Activated CD4-positive, alpha-beta T cell treated with anti-CD3 and anti-CD28 coated beads for 36 hours (primary cell): ENCODE measurements at regions of chr5 and their contacts with region 1.

Region 1: DNA sequence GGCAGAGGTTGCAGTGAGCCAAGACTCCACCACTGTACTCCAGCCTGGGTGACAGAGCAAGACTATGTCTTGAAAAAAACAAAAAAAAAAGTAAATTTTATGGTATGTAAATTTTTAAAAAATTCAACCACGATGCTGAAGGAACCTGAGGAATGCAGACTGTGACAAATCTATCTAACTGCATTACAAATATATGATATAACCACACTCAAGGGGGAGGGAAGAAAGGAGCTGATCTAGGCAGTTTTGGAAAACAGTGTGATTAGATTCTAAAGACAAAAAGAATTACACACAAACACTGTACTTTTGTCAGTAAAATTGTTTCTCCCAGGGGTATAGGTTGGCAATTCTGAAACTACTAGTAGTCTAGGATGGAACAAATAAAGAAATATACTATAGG is 17.0 kb downstream of the LARS1 start:
- DNase-seq: no peak
- ATAC-seq: no peak
- H3K4me3 Mint-ChIP-seq: no peak overlapping the region
- H3K27ac Mint-ChIP-seq: no peak overlapping the region
- H3K4me1 Mint-ChIP-seq: peaks cover 4% of the 10 kb centered on the region
- H3K27me3 Mint-ChIP-seq: no peaks in the 10 kb centered on the region

Region 2: GRCh38 chr5:145975361-145976066 is 189.9 kb before region 1 on chr5:
- CTCF ChIA-PET with region 1: no interaction called
- POLR2A ChIA-PET with region 1: no interaction called
- intact Hi-C with region 1: no loop called
- DNase-seq: peak; percentile 8
- ATAC-seq: no peak
- H3K4me3 Mint-ChIP-seq: no peak overlapping the region
- H3K27ac Mint-ChIP-seq: no peak overlapping the region
- H3K4me1 Mint-ChIP-seq: peaks cover 4% of the 10 kb centered on the region
- H3K27me3 Mint-ChIP-seq: peaks cover 8% of the 10 kb centered on the region

Region 3: GRCh38 chr5:146151970-146152369 is 13.5 kb before region 1 on chr5:
- CTCF ChIA-PET with region 1: interaction called, 3 read pairs
- POLR2A ChIA-PET with region 1: no interaction called
- intact Hi-C with region 1: loop called in 1 of 2 experiments (anchors 1 kb)
- DNase-seq: no peak
- ATAC-seq: no peak
- H3K4me3 Mint-ChIP-seq: no peak overlapping the region
- H3K27ac Mint-ChIP-seq: no peak overlapping the region
- H3K4me1 Mint-ChIP-seq: no peaks in the 10 kb centered on the region
- H3K27me3 Mint-ChIP-seq: no peaks in the 10 kb centered on the region

Region 4: GRCh38 chr5:146188358-146188757 is 22.9 kb after region 1 on chr5:
- CTCF ChIA-PET with region 1: no interaction called
- POLR2A ChIA-PET with region 1: no interaction called
- intact Hi-C with region 1: no loop called
- DNase-seq: no peak
- ATAC-seq: no peak
- H3K4me3 Mint-ChIP-seq: no peak overlapping the region
- H3K27ac Mint-ChIP-seq: no peak overlapping the region
- H3K4me1 Mint-ChIP-seq: peaks cover 9% of the 10 kb centered on the region
- H3K27me3 Mint-ChIP-seq: peaks cover 5% of the 10 kb centered on the region

Region 5: DNA sequence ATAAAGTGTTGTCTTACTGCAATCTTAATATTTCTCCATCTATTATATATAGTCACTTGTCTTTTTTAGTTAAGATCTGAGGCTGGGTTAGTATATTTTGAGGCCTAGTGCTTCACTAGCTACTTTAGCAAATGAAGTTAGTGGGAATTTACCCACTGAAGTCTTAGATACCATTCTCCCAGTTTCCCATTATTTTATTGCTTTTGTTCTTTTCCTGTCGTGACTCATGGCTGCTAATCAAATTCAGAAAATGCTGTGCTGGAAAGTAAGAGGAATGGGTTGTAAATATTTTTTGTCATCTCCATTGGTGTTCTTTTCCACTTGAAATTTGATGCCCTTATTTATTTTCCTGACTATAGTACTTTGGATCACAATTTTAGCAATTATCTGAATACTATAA is 295.9 kb after region 1 on chr5:
- CTCF ChIA-PET with region 1: no interaction called
- POLR2A ChIA-PET with region 1: no interaction called
- intact Hi-C with region 1: loop called in 1 of 2 experiments (anchors 5 kb)
- DNase-seq: no peak
- ATAC-seq: no peak
- H3K4me3 Mint-ChIP-seq: no peak overlapping the region
- H3K27ac Mint-ChIP-seq: no peak overlapping the region
- H3K4me1 Mint-ChIP-seq: peaks cover 25% of the 10 kb centered on the region
- H3K27me3 Mint-ChIP-seq: no peaks in the 10 kb centered on the region